PC-3 (cell line): ENCODE measurements at regions of chr12 and their contacts with region 1.

Region 1: DNA sequence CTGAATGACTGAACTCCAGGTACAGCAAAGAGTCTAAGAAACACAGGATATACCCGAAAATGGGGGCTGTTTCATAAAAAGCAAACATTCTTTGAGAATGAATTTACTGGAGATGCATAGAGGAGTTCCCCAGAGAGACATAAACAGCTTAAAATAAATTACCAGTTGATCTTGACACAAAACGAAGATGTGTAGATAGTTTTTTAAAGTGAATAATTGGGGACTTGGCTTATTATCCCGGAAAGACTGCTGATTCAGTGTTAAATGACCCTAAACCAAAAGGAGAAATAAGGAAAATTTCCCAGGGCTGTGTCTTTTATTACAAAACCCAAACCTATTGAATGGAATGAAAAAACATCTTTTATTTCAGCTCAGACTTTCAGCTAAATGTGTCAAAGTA is 1052.8 kb upstream of the TMEM132C start:
- DNase-seq: no peak
- ATAC-seq: no peak; the same call in 1 of the 2 replicates
- H3K4me3 ChIP-seq: no peak overlapping the region
- H3K27ac ChIP-seq: no peak overlapping the region
- H3K4me1 ChIP-seq: peaks cover 20% of the 10 kb centered on the region
- H3K27me3 ChIP-seq: no peaks in the 10 kb centered on the region
- CTCF ChIP-seq: no peak

Region 2: GRCh38 chr12:127008755-127009403 is 205.3 kb before region 1 on chr12:
- CTCF ChIA-PET with region 1: no interaction called
- POLR2A ChIA-PET with region 1: no interaction called
- intact Hi-C with region 1: no loop called
- DNase-seq: no peak
- ATAC-seq: no peak
- H3K4me3 ChIP-seq: no peak overlapping the region
- H3K27ac ChIP-seq: no peak overlapping the region
- H3K4me1 ChIP-seq: no peaks in the 10 kb centered on the region
- H3K27me3 ChIP-seq: peaks cover 45% of the 10 kb centered on the region
- CTCF ChIP-seq: no peak

Region 3: DNA sequence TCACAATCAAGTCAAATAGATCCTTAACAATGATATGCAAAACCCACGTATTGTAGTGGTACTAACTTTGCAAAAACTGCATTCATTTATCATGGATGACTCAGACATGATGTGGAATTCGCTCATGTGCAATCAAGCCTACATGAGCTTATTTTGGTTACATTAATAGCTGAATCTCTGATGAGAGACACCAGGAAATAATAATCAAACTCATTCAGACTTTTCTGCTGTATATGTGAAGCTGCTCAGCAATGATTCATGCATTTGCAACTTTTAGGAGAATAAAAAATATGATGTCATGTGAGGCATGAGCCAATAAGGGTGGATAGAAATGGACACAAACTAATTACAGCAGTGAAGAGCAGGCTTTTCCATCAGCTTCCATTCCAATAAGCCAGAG is 23.1 kb before region 1 on chr12:
- CTCF ChIA-PET with region 1: no interaction called
- POLR2A ChIA-PET with region 1: no interaction called
- intact Hi-C with region 1: loop called (anchors 2 kb)
- DNase-seq: peak; percentile 71
- ATAC-seq: peak; percentile 65
- H3K4me3 ChIP-seq: no peak overlapping the region
- H3K27ac ChIP-seq: no peak overlapping the region
- H3K4me1 ChIP-seq: peaks cover 12% of the 10 kb centered on the region
- H3K27me3 ChIP-seq: no peaks in the 10 kb centered on the region
- CTCF ChIP-seq: no peak

Region 4: DNA sequence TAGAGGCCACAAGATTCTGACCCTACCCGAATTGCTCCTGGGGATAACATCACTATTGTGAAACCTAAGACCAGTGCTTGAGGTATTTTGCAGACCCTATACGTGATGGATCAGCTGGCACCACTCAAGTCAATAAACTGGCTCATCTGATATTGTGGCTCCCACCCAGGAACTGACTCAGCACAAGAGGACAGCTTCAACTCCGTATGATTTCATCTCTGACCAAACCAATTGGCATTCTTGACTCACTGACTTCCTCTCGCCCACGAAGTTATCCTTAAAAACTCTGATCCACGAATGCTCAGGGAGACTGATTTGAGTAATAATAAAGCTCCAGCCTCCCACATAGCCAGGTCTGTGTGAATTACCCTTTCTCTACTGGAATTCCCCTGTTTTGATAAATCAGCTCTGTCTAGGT is 16.7 kb after region 1 on chr12:
- CTCF ChIA-PET with region 1: no interaction called
- POLR2A ChIA-PET with region 1: no interaction called
- intact Hi-C with region 1: loop called (anchors 2 kb)
- DNase-seq: peak; percentile 99
- ATAC-seq: peak; percentile 86
- H3K4me3 ChIP-seq: peak overlapping the region; percentile 11; the same call in 1 of the 2 replicates
- H3K27ac ChIP-seq: peak overlapping the region; percentile 84
- H3K4me1 ChIP-seq: peaks cover 21% of the 10 kb centered on the region
- H3K27me3 ChIP-seq: no peaks in the 10 kb centered on the region
- CTCF ChIP-seq: no peak

Region 5: DNA sequence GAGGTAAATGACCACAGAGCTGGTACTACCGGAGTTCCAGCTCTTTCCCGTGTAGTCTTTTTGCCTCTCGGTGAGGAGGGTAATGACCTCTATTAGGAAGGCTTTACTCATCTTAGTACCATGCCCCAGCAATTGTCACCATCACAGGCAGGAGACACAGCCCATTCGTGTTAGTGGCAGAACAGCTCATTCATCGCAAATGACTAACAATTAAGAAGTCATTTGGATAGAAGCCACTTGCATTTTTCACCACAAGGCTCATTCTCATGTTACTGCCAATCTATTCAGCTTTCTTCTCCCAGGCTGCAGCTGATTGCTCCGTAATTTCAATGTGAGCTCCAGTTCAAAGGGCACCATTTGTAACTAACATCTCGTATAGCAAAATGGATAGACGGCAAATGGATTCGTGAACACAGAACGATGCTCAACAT is 334.0 kb after region 1 on chr12:
- CTCF ChIA-PET with region 1: no interaction called
- POLR2A ChIA-PET with region 1: no interaction called
- intact Hi-C with region 1: no loop called
- DNase-seq: peak; percentile 94
- ATAC-seq: peak; percentile 75
- H3K4me3 ChIP-seq: peak overlapping the region; percentile 11; the same call in 1 of the 2 replicates
- H3K27ac ChIP-seq: peak overlapping the region; percentile 76
- H3K4me1 ChIP-seq: peaks cover 39% of the 10 kb centered on the region
- H3K27me3 ChIP-seq: no peaks in the 10 kb centered on the region
- CTCF ChIP-seq: no peak